Right lobe of liver (tissue), 6 donors: ENCODE measurements at regions of chr1 and their contacts with region 1.

Region 1: GRCh38 chr1:21368515-21369289 is 71.2 kb upstream of the NBPF3 start:
- DNase-seq: peak; percentile 82
- ATAC-seq: peak; percentile 96 to 97 (median 97)
- H3K4me3 ChIP-seq: no peak overlapping the region
- H3K27ac ChIP-seq: no peak overlapping the region
- H3K4me1 ChIP-seq: no peaks in the 10 kb centered on the region
- H3K27me3 ChIP-seq: no peaks in the 10 kb centered on the region
- CTCF ChIP-seq: peak; percentile 93 to 99 (median 96)
- POLR2A ChIP-seq: no peak

Region 2: DNA sequence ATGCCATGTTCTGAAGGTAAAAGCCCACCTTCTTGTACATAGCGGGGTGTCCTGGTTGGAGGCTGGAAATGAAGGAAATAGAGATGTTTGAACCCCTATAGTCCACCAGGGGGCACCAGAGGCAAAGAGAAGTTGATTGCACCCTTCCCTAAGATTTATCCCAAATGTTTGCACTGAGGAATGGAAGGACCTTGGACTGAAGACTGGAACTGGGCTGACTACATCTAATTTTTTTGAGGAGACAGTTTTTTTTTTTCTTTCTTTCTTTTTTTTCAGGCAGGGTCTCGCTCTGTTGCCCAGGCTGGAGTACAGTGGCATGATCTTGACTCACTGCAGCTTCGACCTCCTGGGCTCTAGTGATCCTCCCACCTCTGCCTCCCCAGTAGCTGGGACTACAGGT is 136.7 kb before region 1 on chr1:
- intact Hi-C with region 1: loop called in 1 of 2 experiments (anchors 5 kb)
- DNase-seq: no peak
- ATAC-seq: peak; percentile 88 to 94 (median 90)
- H3K4me3 ChIP-seq: no peak overlapping the region
- H3K27ac ChIP-seq: no peak overlapping the region
- H3K4me1 ChIP-seq: no peaks in the 10 kb centered on the region
- H3K27me3 ChIP-seq: no peaks in the 10 kb centered on the region
- CTCF ChIP-seq: peak; percentile 75 to 86 (median 81)
- POLR2A ChIP-seq: no peak

Region 3: DNA sequence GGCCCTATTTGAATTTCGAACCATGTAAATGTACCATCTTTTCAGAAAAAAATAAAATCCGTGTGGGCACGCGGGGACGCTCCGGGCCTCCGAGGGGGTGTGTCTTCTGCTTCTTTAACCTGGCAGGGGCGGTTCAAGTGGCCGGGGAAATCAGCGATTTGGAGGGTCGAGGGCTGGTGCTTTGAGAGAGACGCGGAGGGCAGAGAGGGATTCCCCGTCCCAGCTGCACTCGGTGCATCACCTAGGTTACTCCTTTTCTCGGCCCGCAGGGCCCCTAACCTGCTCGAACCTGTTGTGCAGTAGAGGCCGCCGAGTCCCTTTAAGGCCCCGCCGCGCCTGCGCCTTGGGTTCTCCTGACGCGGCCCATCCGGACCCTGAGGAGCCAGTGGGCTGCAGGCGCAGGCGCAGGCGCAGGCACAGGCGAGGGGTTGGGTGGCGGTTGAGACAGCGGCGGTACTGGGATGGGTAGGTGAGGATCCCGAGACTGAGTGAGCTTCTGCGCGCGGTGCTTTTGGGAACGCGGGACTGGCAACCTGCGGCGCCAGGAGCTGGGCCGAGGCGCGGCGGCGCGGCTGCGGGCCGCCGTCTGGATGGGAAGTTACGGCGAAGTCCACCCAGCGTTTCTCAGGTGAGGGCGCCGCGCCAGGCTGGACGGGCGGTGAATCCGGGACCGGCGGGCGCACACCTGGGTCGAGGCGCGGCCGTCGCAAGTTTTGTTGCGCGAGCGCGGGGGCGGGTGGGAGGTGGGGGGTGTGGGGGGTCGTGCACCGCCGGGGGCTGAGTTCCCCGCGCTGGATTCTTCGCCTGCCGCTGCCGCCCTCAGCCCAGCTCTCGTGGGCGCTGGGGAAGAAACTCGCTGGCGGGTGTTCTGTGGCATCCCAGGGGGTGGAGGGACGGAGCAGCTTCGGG is 71.3 kb after region 1 on chr1 and contains the start of gene NBPF3:
- intact Hi-C with region 1: no loop called
- DNase-seq: peak; percentile 78 to 96 (median 90)
- ATAC-seq: peak; percentile 93 to 99 (median 98)
- H3K4me3 ChIP-seq: peak within 1 kb of the TSS; percentile 60 to 83 (median 67)
- H3K27ac ChIP-seq: no peak within 1 kb of the TSS
- H3K4me1 ChIP-seq: peaks cover 0 to 6% (median 0%) of the 10 kb centered on the region in 4 donors
- H3K27me3 ChIP-seq: no peaks in the 10 kb centered on the region
- CTCF ChIP-seq: no peak
- POLR2A ChIP-seq: peak; percentile 53
- total RNA-seq, gene NBPF3: 1.2 to 5.3 (median 2.3) TPM